ENCODE measurements at regions of chr4 and their contacts with region 1.

Region 1: GRCh38 chr4:53994382-53995102 is 69.9 kb downstream of the CHIC2 start:
- DNase-seq: no peak
- H3K4me3 ChIP-seq: no peak overlapping the region
- H3K27ac ChIP-seq: no peak overlapping the region
- H3K4me1 ChIP-seq: peaks cover 25% of the 10 kb centered on the region
- H3K27me3 ChIP-seq: no peaks in the 10 kb centered on the region
- CTCF ChIP-seq: no peak

Region 2: DNA sequence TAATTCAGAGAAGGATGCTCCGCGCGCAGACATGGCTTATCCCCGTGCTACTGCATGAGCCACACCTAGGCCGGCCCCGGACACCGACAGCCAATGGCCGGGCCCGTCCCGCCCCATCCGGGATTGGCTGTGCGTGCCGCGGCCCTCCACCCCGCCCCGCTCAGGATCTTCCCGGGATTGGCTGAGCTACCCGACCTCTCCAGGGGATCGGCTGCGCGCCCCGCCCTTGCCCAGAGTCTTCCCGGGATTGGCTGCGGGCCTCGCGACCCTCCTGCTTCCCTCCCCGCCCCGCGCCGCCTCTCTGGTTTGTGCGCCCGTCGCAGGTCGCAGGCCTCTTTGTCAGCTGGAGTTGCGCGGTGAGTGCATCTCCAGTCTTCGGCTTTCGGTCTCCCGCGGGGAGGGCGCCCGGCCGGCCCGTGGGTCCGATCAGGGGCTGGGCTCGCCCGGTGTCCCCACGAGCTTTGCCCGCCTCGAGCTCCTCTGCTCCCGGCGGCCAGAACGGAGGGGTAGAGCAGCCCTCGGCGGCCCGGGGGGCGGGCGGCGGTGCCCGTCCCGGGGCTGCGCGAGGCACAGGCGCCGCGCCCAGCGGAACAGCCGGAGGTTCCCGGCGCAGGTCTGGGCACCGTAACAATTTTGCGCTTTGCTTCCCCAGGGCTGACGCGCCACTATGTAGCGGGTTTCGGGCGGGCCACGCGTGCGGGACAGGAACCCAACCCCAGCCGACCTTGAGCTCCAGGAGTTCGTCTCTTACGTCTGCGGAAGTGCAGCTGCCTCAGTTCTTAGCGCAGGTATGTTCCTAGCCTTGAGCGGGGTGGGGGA is 1282.2 kb before region 1 on chr4:
- CTCF ChIA-PET with region 1: no interaction called
- dilution Hi-C with region 1: no loop called
- in situ Hi-C with region 1: no loop called
- intact Hi-C with region 1: no loop called
- DNase-seq: peak; percentile 97
- H3K4me3 ChIP-seq: peak overlapping the region; percentile 80 to 85 (median 82)
- H3K27ac ChIP-seq: peak overlapping the region; percentile 84
- H3K4me1 ChIP-seq: peaks cover 31% of the 10 kb centered on the region
- H3K27me3 ChIP-seq: no peaks in the 10 kb centered on the region
- CTCF ChIP-seq: no peak

Region 3: GRCh38 chr4:53929955-53930798 is 64.4 kb before region 1 on chr4:
- CTCF ChIA-PET with region 1: no interaction called
- dilution Hi-C with region 1: no loop called
- in situ Hi-C with region 1: no loop called
- intact Hi-C with region 1: loop called (anchors 5 kb)
- DNase-seq: peak; percentile 73
- H3K4me3 ChIP-seq: no peak overlapping the region
- H3K27ac ChIP-seq: no peak overlapping the region
- H3K4me1 ChIP-seq: peaks cover 28% of the 10 kb centered on the region
- H3K27me3 ChIP-seq: no peaks in the 10 kb centered on the region
- CTCF ChIP-seq: peak; percentile 75 to 89

Measured in mammary epithelial cell (primary cell).